ENCODE measurements at regions of chr20 and their contacts with region 1.

Region 1: DNA sequence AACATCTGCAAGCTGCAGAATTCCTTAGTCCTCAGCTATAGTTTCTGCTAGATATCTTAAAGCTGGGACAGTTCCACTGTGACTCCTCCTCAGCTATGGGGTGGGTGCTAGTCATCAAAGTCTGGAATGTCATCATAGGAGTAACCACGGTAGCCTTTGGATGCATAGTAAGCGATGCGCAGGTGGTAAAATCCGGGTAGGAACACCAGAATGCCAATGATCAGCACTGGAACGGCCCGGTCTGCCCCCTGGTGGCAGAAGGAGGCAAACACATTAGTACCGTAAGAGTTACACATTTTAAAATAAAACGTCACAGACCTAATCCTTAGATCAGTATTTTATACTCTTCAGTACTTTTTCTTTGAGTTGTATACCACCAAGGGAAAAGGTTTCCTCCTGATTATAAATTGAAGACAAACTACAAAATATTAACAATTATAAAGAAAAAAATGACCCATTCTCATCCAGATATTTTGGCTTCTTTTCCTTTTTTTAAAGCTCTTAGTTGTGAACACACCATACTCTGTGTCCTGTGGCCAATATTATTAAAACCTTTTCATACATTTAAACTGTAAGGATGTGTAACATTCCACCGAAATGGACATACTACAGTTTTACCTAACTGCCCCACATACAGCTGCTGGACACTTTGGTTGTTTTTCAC is 18.9 kb downstream of the PCNA start:
- DNase-seq: peak; percentile 81
- ATAC-seq: peak; percentile 93 to 94
- H3K4me3 ChIP-seq: no peak overlapping the region
- H3K27ac ChIP-seq: peak overlapping the region; percentile 11 to 54; a peak in 4 of 6 replicates
- H3K4me1 ChIP-seq: peaks cover 14% of the 10 kb centered on the region
- CTCF ChIP-seq: peak; percentile 97
- EP300 ChIP-seq: no peak
- POLR2A ChIP-seq: no peak
- RAD21 ChIP-seq: peak; percentile 94 to 95

Region 2: DNA sequence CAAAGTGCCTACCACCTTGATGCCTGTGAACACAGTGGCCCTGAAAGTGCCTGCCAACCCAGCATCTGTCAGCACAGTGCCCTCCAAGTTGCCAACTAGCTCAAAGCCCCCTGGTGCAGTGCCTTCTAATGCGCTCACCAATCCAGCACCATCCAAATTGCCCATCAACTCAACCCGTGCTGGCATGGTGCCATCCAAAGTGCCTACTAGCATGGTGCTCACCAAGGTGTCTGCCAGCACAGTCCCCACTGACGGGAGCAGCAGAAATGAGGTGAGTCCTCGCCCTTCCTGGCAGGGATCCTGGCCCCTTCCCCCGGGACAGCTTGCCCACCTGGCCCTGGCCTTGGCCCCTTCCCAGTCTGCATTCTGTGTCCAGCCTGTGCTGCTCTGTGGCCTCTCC is 1236.3 kb before region 1 on chr20:
- CTCF ChIA-PET with region 1: no interaction called
- POLR2A ChIA-PET with region 1: no interaction called
- DNase-seq: no peak
- ATAC-seq: no peak
- H3K4me3 ChIP-seq: no peak overlapping the region
- H3K27ac ChIP-seq: no peak overlapping the region
- H3K4me1 ChIP-seq: no peaks in the 10 kb centered on the region
- CTCF ChIP-seq: no peak
- EP300 ChIP-seq: no peak
- POLR2A ChIP-seq: no peak
- RAD21 ChIP-seq: no peak

Region 3: GRCh38 chr20:4740774-4741431 is 359.9 kb before region 1 on chr20:
- CTCF ChIA-PET with region 1: interaction called, 10 read pairs
- POLR2A ChIA-PET with region 1: no interaction called
- DNase-seq: peak; percentile 58 to 66
- ATAC-seq: peak; percentile 72 to 86; a peak in 5 of 6 replicates
- H3K4me3 ChIP-seq: no peak overlapping the region
- H3K27ac ChIP-seq: no peak overlapping the region
- H3K4me1 ChIP-seq: no peaks in the 10 kb centered on the region
- CTCF ChIP-seq: peak; percentile 89
- EP300 ChIP-seq: no peak
- POLR2A ChIP-seq: no peak
- RAD21 ChIP-seq: peak; percentile 59 to 66

Region 4: DNA sequence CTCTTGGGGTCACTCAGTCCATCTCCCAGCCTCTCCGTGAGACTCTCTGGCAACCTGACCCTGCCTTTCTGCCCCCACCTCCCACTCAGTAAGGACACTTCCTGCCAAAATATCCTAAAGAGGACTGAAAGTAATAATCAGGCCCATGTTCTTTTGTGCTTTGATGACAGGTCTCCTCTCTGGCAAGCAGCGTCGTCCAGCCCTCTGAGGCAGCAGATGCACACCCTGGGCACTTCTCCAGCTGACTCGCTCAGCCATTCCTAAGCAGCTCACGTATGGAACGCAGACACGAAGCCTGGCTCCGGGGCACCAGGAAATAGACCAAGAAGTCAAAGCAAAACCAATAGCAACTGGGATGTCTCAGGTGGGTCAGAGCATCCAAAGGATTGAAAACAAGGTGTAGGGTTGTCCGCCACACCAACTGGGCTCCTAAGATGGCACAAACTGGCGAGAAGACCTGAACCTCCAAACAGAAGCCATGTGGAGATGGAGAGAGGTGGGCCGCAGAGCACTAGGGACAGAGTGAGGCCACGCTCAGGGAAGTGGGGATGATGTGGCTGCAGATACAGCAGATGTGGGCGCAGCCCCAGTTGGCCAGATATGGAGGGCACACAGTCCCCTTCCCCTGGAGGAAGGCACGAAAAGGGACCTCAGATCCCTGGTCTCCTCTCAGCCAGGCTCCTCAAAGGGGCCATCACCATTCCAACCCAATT is 279.9 kb before region 1 on chr20:
- CTCF ChIA-PET with region 1: no interaction called
- POLR2A ChIA-PET with region 1: no interaction called
- DNase-seq: peak; percentile 41 to 50
- ATAC-seq: peak in 1 of 2 experiments; percentile 29; a peak in 3 of 6 replicates
- H3K4me3 ChIP-seq: no peak overlapping the region
- H3K27ac ChIP-seq: peak overlapping the region in 1 of 2 experiments; percentile 53; a peak in 3 of 6 replicates
- H3K4me1 ChIP-seq: peaks cover 55% of the 10 kb centered on the region
- CTCF ChIP-seq: no peak
- EP300 ChIP-seq: no peak
- POLR2A ChIP-seq: no peak
- RAD21 ChIP-seq: no peak

Region 5: DNA sequence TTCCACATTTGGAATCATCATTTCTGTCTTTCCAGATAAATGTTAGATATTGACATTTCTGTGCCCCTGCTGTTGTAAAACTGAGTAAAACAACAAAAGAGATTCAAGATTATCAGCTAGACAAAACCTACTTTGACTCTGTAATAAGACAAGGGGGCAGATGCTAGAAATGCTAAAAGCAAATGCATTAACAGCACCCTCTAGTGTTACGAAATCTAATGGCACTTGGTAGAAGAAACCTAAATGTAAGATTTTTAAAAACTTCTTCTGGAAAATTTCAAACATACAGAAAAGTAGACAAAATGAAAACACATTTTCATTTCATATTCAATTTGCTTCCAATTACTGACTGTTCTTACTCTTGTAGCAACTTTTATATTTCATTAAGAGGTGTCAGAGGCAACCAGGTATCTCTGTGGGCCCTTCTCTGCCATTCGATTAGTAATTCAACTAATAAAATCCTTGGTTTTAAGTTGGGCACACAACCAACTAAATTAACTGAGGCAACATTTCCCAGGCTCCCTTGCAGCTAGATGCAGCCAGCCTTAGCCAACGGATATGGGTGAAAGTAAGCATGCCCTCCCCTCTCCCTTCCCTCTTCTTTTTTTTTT is 144.5 kb before region 1 on chr20:
- CTCF ChIA-PET with region 1: interaction called, 22 read pairs
- POLR2A ChIA-PET with region 1: no interaction called
- DNase-seq: peak; percentile 76 to 79
- ATAC-seq: peak; percentile 80 to 81; a peak in 5 of 6 replicates
- H3K4me3 ChIP-seq: no peak overlapping the region
- H3K27ac ChIP-seq: no peak overlapping the region; a peak in 1 of 6 replicates
- H3K4me1 ChIP-seq: peaks cover 19% of the 10 kb centered on the region
- CTCF ChIP-seq: peak; percentile 97
- EP300 ChIP-seq: no peak
- POLR2A ChIP-seq: no peak
- RAD21 ChIP-seq: peak; percentile 90 to 94

Region 6: GRCh38 chr20:4978050-4978918 is 122.5 kb before region 1 on chr20:
- CTCF ChIA-PET with region 1: interaction called, 13 read pairs
- POLR2A ChIA-PET with region 1: no interaction called
- DNase-seq: no peak
- ATAC-seq: peak; percentile 77 to 78; a peak in 4 of 6 replicates
- H3K4me3 ChIP-seq: no peak overlapping the region
- H3K27ac ChIP-seq: peak overlapping the region in 1 of 2 experiments; percentile 35; a peak in 2 of 6 replicates
- H3K4me1 ChIP-seq: peaks cover 22% of the 10 kb centered on the region
- CTCF ChIP-seq: no peak
- EP300 ChIP-seq: no peak
- POLR2A ChIP-seq: no peak
- RAD21 ChIP-seq: no peak

Region 7: DNA sequence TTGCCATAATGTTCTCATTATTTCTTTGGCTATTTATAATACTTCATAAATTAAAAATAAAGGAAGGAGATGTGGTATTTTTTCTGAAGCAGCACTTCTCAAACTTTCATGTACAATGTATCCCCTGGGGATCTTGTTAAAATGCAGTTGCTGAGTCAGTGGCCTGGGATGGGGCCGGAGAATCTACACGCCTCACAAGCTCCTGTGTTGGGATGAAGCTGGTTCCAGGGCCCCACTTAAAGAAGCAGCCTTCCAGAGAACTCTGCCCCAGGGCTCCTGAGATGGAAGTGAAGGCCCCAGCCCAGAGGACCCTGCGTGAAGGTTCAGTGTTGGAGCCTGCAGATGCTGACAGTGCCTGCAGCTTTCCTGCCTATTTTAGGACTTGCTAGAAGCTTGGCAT is 59.4 kb before region 1 on chr20:
- CTCF ChIA-PET with region 1: interaction called, 28 read pairs
- POLR2A ChIA-PET with region 1: no interaction called
- DNase-seq: no peak
- ATAC-seq: peak; percentile 47 to 56; a peak in 3 of 6 replicates
- H3K4me3 ChIP-seq: no peak overlapping the region
- H3K27ac ChIP-seq: peak overlapping the region in 1 of 2 experiments; percentile 5; a peak in 1 of 6 replicates
- H3K4me1 ChIP-seq: peaks cover 5% of the 10 kb centered on the region; the same call in 2 of the 3 replicates
- CTCF ChIP-seq: no peak
- EP300 ChIP-seq: no peak
- POLR2A ChIP-seq: no peak
- RAD21 ChIP-seq: no peak

Region 8: DNA sequence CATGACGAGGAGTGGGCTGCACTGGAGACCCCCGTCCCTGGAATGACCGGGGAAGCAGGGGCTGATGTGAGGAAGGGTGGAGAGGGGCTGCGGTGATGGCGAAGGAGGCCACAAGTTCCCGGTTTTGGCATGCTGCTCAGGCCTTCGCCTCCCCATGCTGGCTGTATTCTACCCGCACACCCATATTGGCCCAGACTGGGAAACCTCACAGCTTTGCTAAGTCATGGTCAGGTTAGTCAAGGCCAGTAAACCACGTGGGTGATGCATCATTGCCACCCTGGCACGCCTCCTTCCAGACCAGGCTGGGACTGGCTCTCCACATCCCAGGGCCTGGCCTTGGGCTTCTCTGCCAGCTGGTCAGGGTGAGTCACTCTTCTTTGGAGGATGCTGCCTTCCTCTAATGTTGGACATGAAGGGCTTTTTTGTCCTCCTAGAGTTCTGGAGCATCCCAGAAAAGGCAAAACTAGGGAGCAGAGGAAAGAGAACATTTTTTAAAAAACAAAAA is 34.9 kb before region 1 on chr20:
- CTCF ChIA-PET with region 1: interaction called, 26 read pairs
- POLR2A ChIA-PET with region 1: interaction called, 4 read pairs
- DNase-seq: peak; percentile 92 to 98
- ATAC-seq: peak; percentile 96
- H3K4me3 ChIP-seq: no peak overlapping the region
- H3K27ac ChIP-seq: peak overlapping the region; percentile 91 to 92
- H3K4me1 ChIP-seq: peaks cover 40% of the 10 kb centered on the region
- CTCF ChIP-seq: no peak
- EP300 ChIP-seq: peak; percentile 28 to 68; a peak in 2 of 5 replicates
- POLR2A ChIP-seq: no peak
- RAD21 ChIP-seq: 0 out of 5 replicates have a peak, but pooled peaks of 1 of the 2 experiments have one; percentile 19

Region 9: DNA sequence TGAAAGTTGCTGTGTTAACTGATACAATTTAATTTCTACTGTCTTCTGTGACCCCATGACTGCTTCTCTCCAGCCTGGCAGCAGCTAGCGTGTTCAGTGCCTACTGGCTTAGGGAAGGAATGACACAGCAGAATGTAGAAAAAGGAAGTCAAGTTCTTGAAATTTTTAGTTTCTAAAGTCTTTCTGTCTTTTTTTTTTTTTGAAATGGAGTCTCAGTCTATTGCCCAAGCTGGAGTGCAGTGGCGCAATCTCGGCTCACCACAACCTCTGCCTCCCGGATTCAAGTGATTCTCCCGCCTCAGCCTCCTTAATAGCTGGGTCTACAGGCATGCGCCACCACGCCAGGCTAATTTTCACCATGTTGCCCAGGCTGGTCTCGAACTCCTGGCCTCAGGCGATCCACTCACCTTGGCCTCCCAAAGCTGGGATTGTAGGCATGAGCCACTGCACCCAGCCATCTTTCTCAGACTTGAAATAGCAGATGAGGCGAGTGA is 20.4 kb before region 1 on chr20:
- CTCF ChIA-PET with region 1: interaction called, 20 read pairs
- POLR2A ChIA-PET with region 1: no interaction called
- DNase-seq: peak in 1 of 2 experiments; percentile 70
- ATAC-seq: peak; percentile 65 to 66; a peak in 3 of 6 replicates
- H3K4me3 ChIP-seq: no peak overlapping the region
- H3K27ac ChIP-seq: peak overlapping the region; percentile 71 to 80
- H3K4me1 ChIP-seq: peaks cover 39% of the 10 kb centered on the region
- CTCF ChIP-seq: no peak
- EP300 ChIP-seq: no peak
- POLR2A ChIP-seq: no peak
- RAD21 ChIP-seq: no peak

Region 10: DNA sequence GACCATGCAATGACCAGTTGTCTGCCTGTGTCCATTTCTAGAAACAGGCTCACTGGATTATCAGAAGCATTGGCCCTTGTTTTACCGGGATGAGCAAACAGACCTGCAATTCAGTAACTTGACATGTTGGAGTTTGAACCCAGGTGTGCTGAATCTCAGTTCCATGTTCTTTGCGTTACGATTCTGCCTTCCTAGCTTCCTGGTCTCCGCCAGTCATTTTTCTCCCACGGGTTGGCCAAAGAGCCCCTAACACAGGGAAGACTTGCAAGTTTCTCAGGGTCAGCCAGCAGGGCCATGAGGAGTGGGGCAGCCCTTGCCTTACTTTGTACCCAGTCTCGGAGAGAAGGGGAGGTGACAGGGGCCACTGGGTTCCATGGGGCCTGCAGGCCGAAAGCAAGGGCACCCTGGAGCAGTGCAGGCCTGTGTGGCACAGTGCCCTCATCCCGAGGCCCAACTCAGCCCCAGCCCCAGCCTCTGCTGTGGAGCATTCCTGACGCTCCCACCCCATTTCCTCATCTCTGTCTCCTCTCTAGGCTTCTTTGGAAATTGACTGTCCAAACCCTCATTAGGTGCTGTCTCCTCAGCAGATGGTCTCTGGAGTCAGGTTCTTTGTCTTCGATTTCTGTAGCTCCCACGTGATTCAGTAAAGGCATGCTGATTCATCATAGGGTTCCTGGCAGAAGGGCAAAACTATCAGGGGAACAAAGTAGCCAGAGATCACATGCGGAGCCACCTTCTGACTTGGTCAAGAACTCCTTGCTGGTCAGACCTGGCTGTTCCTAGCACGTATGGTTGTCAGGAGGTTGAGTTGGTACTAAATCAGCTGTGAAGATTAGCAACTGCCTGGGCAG is 49.6 kb after region 1 on chr20:
- CTCF ChIA-PET with region 1: no interaction called
- POLR2A ChIA-PET with region 1: no interaction called
- DNase-seq: peak in 1 of 2 experiments; percentile 16
- ATAC-seq: peak in 1 of 2 experiments; percentile 58; a peak in 3 of 6 replicates
- H3K4me3 ChIP-seq: no peak overlapping the region
- H3K27ac ChIP-seq: peak overlapping the region; percentile 1 to 67; a peak in 3 of 6 replicates
- H3K4me1 ChIP-seq: peaks cover 30% of the 10 kb centered on the region
- CTCF ChIP-seq: no peak
- EP300 ChIP-seq: no peak
- POLR2A ChIP-seq: no peak
- RAD21 ChIP-seq: no peak

Region 11: DNA sequence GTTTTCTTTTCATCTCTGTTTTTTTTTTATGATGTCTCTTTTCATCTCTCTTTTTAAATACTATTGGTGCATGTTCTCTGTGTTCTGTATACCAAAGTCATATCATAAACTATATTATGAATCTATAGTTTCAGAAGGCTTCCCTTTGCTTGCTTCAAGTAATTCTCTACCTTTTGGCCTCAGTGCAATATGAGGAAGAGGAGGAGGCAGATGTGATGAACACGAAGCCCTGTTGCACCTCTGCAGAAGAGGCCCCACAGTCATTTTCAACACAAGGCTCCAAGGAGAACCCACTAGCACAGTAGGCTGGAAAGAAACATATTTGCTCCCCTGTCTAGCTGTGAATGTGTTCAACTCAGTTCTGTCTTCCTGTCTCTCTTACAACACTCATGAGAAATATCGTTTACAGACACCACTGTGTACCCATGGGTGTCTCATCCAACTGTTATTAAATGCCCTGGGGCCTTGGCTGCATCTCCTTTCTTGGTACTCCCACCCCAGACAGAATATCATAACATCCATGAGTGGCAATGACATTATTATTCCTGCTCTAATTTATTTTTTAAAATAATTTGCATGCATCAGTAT is 526.7 kb after region 1 on chr20:
- CTCF ChIA-PET with region 1: no interaction called
- POLR2A ChIA-PET with region 1: no interaction called
- DNase-seq: no peak
- ATAC-seq: peak; percentile 32 to 59; a peak in 4 of 6 replicates
- H3K4me3 ChIP-seq: no peak overlapping the region
- H3K27ac ChIP-seq: peak overlapping the region; percentile 3 to 27; a peak in 3 of 6 replicates
- H3K4me1 ChIP-seq: peaks cover 7% of the 10 kb centered on the region; the same call in 2 of the 3 replicates
- CTCF ChIP-seq: no peak
- EP300 ChIP-seq: no peak
- POLR2A ChIP-seq: no peak
- RAD21 ChIP-seq: no peak